ENCODE measurements at regions of chr5 and their contacts with region 1.

Region 1: DNA sequence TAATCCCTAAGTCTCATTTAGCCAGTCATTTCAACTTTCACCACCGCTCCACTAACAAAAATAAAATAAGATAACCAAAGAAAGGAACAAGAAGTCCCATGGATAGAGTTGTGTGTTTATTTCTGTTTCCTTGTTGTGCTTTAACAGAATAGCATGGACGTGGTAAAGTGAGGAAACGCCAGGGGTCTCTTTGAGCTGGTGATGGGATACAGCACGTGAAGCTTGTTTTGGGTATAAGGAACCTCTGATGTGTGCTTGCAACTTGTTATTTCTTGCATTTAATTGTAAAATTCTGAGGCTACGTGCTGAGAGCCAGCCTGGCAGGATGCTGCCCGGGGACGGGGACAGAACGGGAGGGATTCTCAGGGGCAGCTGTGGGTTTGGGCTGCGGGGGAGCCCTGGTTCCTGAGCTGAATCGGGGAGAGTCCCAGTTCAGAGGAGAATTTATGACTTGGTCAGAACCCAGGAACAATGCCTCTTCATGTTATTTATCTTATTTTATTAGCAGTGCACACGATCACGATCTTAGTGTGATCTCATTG is 63.4 kb downstream of the ANKRD33B start:
- DNase-seq: peak in 1 of 2 experiments; percentile 61
- H3K4me3 ChIP-seq: peak overlapping the region; percentile 21 to 54 (median 46); a peak in 5 of 8 replicates
- H3K27ac ChIP-seq: no peak overlapping the region
- H3K4me1 ChIP-seq: peaks cover 0 to 12% (median 9%) of the 10 kb centered on the region in 4 experiments; a peak in 6 of 7 replicates
- H3K27me3 ChIP-seq: no peaks in the 10 kb centered on the region
- CTCF ChIP-seq: peak in 1 of 3 experiments; percentile 6; a peak in 1 of 4 replicates
- EP300 ChIP-seq: no peak
- POLR2A ChIP-seq: 0 out of 3 replicates have a peak, but pooled peaks of 1 of the 2 experiments have one; percentile 41
- RAD21 ChIP-seq: no peak

Region 2: GRCh38 chr5:10384483-10384882 is 242.7 kb before region 1 on chr5:
- CTCF ChIA-PET with region 1: no interaction called
- POLR2A ChIA-PET with region 1: no interaction called
- DNase-seq: no peak
- H3K4me3 ChIP-seq: no peak overlapping the region
- H3K27ac ChIP-seq: no peak overlapping the region
- H3K4me1 ChIP-seq: no peaks in the 10 kb centered on the region
- H3K27me3 ChIP-seq: no peaks in the 10 kb centered on the region
- CTCF ChIP-seq: no peak
- EP300 ChIP-seq: no peak
- POLR2A ChIP-seq: no peak
- RAD21 ChIP-seq: no peak

Region 3: DNA sequence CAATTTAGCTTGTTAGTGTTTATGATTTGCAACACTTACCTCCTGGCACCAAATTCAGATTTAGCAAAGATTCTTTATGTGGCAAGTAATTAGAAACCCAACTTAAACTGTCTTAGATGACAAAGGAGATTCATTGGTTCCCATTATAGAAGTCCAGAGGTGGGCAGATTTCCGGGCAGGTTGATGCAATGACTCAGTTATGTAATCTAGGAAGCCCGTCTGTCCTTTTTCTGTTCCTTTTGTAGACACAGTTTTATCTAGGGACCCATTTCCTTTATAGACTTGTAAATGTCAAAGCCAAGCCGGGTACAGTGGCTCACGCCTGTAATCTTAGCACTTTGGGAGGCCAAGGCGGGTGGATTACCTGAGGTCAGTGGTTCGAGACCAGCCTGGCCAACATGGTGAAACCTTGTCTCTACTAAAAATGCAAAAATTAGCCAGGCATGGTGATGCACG is 83.6 kb before region 1 on chr5:
- CTCF ChIA-PET with region 1: interaction called, 11 read pairs
- POLR2A ChIA-PET with region 1: no interaction called
- DNase-seq: no peak
- H3K4me3 ChIP-seq: no peak overlapping the region
- H3K27ac ChIP-seq: no peak overlapping the region
- H3K4me1 ChIP-seq: no peaks in the 10 kb centered on the region
- H3K27me3 ChIP-seq: no peaks in the 10 kb centered on the region
- CTCF ChIP-seq: no peak
- EP300 ChIP-seq: no peak
- POLR2A ChIP-seq: no peak
- RAD21 ChIP-seq: no peak

Region 4: GRCh38 chr5:10559871-10560270 is 67.4 kb before region 1 on chr5:
- CTCF ChIA-PET with region 1: interaction called, 15 read pairs
- POLR2A ChIA-PET with region 1: no interaction called
- DNase-seq: no peak
- H3K4me3 ChIP-seq: no peak overlapping the region
- H3K27ac ChIP-seq: no peak overlapping the region
- H3K4me1 ChIP-seq: peaks cover 2 to 7% (median 4%) of the 10 kb centered on the region in 4 experiments; a peak in 5 of 7 replicates
- H3K27me3 ChIP-seq: peaks cover 11 to 28% (median 26%) of the 10 kb centered on the region in 4 experiments
- CTCF ChIP-seq: no peak
- EP300 ChIP-seq: no peak
- POLR2A ChIP-seq: no peak
- RAD21 ChIP-seq: no peak

Region 5: GRCh38 chr5:10583663-10584572 is 43.3 kb before region 1 on chr5:
- CTCF ChIA-PET with region 1: interaction called, 11 read pairs
- POLR2A ChIA-PET with region 1: no interaction called
- DNase-seq: peak in 1 of 2 experiments; percentile 29
- H3K4me3 ChIP-seq: no peak overlapping the region
- H3K27ac ChIP-seq: no peak overlapping the region
- H3K4me1 ChIP-seq: peaks cover 0 to 6% (median 5%) of the 10 kb centered on the region in 4 experiments; a peak in 6 of 7 replicates
- H3K27me3 ChIP-seq: no peaks in the 10 kb centered on the region
- CTCF ChIP-seq: no peak
- EP300 ChIP-seq: no peak
- POLR2A ChIP-seq: no peak
- RAD21 ChIP-seq: no peak

Region 6: GRCh38 chr5:10645146-10645545 is 17.9 kb after region 1 on chr5:
- CTCF ChIA-PET with region 1: interaction called, 16 read pairs
- POLR2A ChIA-PET with region 1: interaction called, 3 read pairs
- DNase-seq: no peak
- H3K4me3 ChIP-seq: no peak overlapping the region
- H3K27ac ChIP-seq: no peak overlapping the region
- H3K4me1 ChIP-seq: peaks cover 0 to 3% (median 2%) of the 10 kb centered on the region in 4 experiments; a peak in 3 of 7 replicates
- H3K27me3 ChIP-seq: no peaks in the 10 kb centered on the region
- CTCF ChIP-seq: no peak
- EP300 ChIP-seq: no peak
- POLR2A ChIP-seq: no peak
- RAD21 ChIP-seq: no peak

Measured in H1 (cell line).